PC-9 (cell line): ENCODE measurements at regions of chr5 and their contacts with region 1.

Region 1: GRCh38 chr5:180291943-180292831 is at the start of gene MAPK9:
- DNase-seq: peak; percentile 60 to 85
- H3K4me3 ChIP-seq: peak within 1 kb of the TSS; percentile 88
- H3K27ac ChIP-seq: 0 out of 2 replicates have a peak within 1 kb of the TSS, but pooled peaks have one; percentile 31
- H3K4me1 ChIP-seq: peaks cover 22% of the 10 kb centered on the region
- H3K27me3 ChIP-seq: no peaks in the 10 kb centered on the region
- CTCF ChIP-seq: no peak
- total RNA-seq, gene MAPK9: 48.8 and 54.0 TPM in 2 replicates

Region 2: DNA sequence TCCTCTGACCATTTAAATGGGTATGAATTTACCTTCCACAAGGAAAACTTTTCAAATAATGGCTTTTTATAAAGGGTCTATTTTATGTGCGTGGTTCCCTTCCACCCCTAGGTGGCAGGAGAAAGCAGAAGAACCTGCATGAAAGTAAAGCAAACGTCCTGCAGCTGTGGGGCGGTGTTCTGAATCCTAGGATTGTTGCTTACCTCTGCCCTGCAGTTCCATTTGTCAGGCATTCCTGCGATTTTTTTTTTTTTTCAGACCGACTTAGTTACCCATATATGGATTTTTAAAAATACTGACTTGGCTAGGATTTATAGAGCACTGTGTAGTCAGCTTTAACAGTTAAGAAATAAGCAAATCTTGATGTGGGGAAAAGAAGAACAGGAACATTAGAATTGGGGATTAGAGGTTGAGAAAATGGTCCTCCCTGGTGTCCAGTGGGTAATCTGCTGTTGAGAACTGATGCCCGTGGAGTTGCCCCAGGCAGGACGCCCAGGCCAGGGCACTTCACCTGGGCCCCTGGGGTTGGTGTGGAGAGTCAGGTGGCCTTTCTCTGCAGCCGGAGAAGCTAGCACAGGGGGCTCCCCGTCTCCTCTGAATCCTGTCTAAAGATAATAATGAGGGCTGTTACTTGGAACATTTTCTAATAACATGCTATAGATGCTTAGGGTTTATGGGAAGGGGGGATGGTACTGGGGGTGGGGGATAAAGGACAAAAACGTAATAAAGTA is 528.8 kb before region 1 on chr5:
- CTCF ChIA-PET with region 1: interaction called, 17 read pairs
- POLR2A ChIA-PET with region 1: no interaction called
- intact Hi-C with region 1: no loop called
- DNase-seq: peak; percentile 74
- H3K4me3 ChIP-seq: no peak overlapping the region
- H3K27ac ChIP-seq: peak overlapping the region; percentile 52
- H3K4me1 ChIP-seq: peaks cover 47% of the 10 kb centered on the region
- H3K27me3 ChIP-seq: no peaks in the 10 kb centered on the region
- CTCF ChIP-seq: peak; percentile 91

Region 3: DNA sequence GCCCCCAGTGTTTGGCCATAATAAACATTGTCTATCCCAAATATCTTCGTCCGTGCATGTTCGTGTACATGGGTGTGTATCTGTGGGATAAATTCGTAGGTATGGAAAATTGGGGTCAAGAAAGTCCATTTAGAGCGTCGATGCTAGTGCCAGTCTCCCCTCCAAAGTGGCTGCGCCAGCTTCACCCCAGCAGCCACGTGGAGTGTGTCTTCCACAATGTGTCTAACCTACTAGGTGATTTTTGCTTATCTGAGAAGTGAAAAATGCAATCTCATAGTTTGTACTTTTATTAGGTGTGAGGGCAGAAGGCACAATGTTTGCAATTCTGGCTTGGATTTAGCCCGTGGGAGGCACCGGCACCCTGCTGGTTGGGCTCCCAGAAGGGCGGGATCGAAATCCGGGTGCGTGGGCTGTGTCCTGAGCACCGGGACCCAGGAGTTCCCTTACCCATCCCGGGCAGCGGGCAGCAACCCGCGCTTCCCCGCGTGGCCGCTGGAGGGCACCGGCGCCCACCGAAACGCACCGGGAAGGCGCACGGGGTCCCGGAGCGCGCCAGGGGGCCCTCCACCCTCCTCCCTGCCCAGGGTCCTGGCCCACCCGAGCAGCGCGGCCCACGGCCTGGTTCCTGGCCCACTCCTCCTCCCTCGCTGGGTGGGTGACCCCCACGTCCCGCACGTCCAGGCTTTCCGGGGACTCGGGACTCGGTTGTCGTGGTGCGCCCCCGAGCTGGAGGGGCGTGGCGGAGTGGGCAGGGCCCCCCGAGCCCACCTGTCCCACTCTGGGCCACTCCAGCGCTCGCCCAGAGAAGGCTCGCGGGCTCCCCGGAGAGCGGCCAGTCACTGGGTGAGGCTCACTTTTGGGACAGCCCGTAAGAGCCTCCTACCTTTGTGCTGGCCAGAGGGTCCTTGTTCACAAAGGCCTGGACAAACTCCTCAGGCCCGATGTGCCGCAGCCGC is 165.2 kb before region 1 on chr5:
- CTCF ChIA-PET with region 1: no interaction called
- POLR2A ChIA-PET with region 1: no interaction called
- intact Hi-C with region 1: loop called (anchors 5 kb)
- DNase-seq: peak; percentile 30 to 61
- H3K4me3 ChIP-seq: no peak overlapping the region
- H3K27ac ChIP-seq: no peak overlapping the region
- H3K4me1 ChIP-seq: no peaks in the 10 kb centered on the region
- H3K27me3 ChIP-seq: peaks cover 11% of the 10 kb centered on the region
- CTCF ChIP-seq: peak; percentile 87

Region 4: GRCh38 chr5:180305481-180305880 is 13.3 kb after region 1 on chr5:
- CTCF ChIA-PET with region 1: no interaction called
- POLR2A ChIA-PET with region 1: no interaction called
- intact Hi-C with region 1: no loop called
- DNase-seq: no peak
- H3K4me3 ChIP-seq: no peak overlapping the region
- H3K27ac ChIP-seq: no peak overlapping the region
- H3K4me1 ChIP-seq: no peaks in the 10 kb centered on the region
- H3K27me3 ChIP-seq: no peaks in the 10 kb centered on the region
- CTCF ChIP-seq: no peak

Region 5: GRCh38 chr5:180328296-180329137 is 36.3 kb after region 1 on chr5:
- CTCF ChIA-PET with region 1: interaction called, 7 read pairs
- POLR2A ChIA-PET with region 1: interaction called, 3 read pairs
- intact Hi-C with region 1: loop called (anchors 1 kb)
- DNase-seq: peak; percentile 55 to 78
- H3K4me3 ChIP-seq: no peak overlapping the region
- H3K27ac ChIP-seq: no peak overlapping the region
- H3K4me1 ChIP-seq: peaks cover 45% of the 10 kb centered on the region
- H3K27me3 ChIP-seq: no peaks in the 10 kb centered on the region
- CTCF ChIP-seq: peak; percentile 90

Region 6: DNA sequence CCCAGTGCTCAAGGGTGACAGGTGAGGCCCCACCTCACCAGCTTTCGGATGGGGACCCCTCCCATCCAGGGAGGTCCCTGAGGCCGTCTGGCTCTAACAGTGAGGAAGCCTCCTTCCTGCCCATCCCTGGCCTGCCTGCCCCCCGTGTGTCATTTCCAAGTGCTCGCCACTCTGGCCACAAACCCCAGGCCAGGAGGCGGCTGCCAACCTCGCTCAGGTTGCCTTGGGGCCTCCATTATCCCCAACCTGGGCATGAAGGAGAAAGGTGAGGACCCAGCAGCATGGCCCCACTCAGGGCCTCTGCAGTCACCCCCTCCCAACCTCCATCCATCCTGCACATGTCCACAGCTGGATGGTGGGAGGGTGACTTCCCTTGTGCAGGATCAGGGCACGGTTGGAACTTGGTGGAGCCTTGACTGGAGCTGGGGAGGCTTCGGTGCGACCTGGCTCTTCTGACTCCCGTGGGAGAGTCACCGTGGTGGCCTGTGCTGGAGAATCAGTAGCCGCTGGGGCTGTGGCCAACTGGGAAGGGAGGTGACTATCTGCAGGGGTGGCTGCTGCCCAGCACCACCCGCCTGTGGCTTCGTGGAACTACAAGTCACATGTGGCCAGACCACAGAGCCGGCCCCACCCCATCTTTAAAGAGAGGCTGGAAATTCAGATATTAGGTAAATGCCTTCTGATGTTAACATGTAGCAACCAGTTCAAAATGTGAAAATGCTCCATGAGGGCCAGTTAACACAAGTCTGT is 98.4 kb after region 1 on chr5:
- CTCF ChIA-PET with region 1: no interaction called
- POLR2A ChIA-PET with region 1: no interaction called
- intact Hi-C with region 1: loop called (anchors 2 kb)
- DNase-seq: peak in 1 of 2 experiments; percentile 17
- H3K4me3 ChIP-seq: no peak overlapping the region
- H3K27ac ChIP-seq: no peak overlapping the region
- H3K4me1 ChIP-seq: no peaks in the 10 kb centered on the region
- H3K27me3 ChIP-seq: no peaks in the 10 kb centered on the region
- CTCF ChIP-seq: 0 out of 2 replicates have a peak, but pooled peaks have one; percentile 28

Region 7: DNA sequence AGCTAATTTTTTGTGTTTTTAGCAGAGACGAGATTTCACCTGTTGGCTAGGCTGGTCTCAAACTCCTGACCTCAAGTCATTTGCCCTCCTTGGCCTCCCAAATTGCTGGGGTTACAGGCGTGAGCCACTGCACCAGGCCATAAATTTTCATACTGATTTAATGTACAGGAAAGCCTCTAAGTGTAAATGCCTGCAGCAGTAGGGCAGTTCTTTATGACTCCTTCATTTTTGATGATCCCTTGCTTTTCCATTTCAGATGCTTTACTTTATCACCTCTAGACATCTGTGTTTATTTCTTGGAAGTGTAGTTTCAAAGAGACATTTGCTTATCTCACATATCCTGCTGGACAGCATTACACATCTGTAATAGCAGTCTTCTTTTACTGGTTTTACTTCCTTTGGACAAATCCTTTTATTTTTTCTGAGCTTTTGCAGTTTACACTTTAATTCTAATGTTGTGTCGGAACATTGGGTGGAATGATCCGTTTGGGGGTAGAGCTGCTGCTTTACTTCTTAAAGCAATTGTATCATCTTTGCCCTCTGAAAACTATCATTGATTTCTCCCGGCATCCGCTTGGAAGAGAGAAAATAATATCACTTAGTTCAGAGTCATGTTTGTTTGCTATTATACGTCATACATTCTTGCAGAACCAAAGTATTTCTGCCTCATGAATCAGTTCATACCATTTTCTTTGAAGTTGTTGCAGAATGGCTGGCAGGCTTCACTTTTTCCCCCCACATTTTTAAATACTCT is 263.2 kb after region 1 on chr5:
- CTCF ChIA-PET with region 1: interaction called, 11 read pairs
- POLR2A ChIA-PET with region 1: no interaction called
- intact Hi-C with region 1: no loop called
- DNase-seq: no peak
- H3K4me3 ChIP-seq: no peak overlapping the region
- H3K27ac ChIP-seq: no peak overlapping the region
- H3K4me1 ChIP-seq: no peaks in the 10 kb centered on the region
- H3K27me3 ChIP-seq: no peaks in the 10 kb centered on the region
- CTCF ChIP-seq: no peak

Region 8: GRCh38 chr5:180670586-180671359 is 378.6 kb after region 1 on chr5:
- CTCF ChIA-PET with region 1: no interaction called
- POLR2A ChIA-PET with region 1: no interaction called
- intact Hi-C with region 1: loop called (anchors 1 kb)
- DNase-seq: peak in 1 of 2 experiments; percentile 52
- H3K4me3 ChIP-seq: no peak overlapping the region
- H3K27ac ChIP-seq: no peak overlapping the region
- H3K4me1 ChIP-seq: no peaks in the 10 kb centered on the region
- H3K27me3 ChIP-seq: peaks cover 29% of the 10 kb centered on the region
- CTCF ChIP-seq: peak; percentile 72